ENCODE measurements at regions of chr4 and their contacts with region 1.

Region 1: DNA sequence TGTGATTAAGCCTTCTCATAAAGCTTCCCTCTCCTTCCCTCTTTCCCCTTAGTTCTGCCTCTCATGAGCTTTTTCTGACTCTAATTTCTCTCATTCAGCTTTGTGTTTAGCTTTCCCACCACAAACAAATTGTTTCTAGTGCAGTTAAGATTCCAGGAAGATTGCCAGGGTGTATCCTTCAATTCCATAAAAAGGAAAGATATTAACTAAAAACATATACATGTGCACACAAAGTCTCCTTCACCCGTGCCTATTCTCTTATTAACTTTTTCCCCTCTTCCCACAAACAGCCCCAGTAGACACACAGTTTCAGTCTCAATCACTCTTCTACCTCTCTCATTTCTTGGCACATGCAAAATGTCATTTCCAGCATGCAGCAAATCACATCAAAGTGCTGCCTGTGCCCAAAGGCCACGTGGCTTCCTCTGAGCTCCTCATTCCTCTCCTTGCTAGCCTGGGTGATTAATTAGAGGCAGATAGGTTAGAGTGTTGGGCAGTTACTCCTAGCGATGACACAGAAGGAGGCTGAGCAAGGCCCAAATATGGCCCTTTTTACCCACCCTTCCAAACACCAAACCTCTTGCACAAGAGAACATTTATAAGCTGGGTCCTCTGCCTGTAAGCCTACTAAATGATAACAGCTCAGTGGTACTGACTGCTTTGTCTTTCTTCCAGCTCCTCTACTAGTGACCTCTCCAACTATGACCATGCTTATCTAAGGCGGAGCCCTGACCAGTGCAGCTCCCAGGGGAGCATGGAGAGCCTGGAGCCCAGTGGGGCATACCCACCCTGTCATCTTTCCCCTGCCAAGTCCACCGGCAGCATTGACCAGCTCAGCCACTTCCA is 159.6 kb downstream of the SOWAHB start:
- DNase-seq: peak in 1 of 10 donors; percentile 32
- H3K4me3 ChIP-seq: no peak overlapping the region
- H3K27ac ChIP-seq: peak overlapping the region in 14 of 59 donors; percentile 3 to 63 (median 35)
- H3K27me3 ChIP-seq: no peaks in the 10 kb centered on the region
- CTCF ChIP-seq: no peak

Region 2: DNA sequence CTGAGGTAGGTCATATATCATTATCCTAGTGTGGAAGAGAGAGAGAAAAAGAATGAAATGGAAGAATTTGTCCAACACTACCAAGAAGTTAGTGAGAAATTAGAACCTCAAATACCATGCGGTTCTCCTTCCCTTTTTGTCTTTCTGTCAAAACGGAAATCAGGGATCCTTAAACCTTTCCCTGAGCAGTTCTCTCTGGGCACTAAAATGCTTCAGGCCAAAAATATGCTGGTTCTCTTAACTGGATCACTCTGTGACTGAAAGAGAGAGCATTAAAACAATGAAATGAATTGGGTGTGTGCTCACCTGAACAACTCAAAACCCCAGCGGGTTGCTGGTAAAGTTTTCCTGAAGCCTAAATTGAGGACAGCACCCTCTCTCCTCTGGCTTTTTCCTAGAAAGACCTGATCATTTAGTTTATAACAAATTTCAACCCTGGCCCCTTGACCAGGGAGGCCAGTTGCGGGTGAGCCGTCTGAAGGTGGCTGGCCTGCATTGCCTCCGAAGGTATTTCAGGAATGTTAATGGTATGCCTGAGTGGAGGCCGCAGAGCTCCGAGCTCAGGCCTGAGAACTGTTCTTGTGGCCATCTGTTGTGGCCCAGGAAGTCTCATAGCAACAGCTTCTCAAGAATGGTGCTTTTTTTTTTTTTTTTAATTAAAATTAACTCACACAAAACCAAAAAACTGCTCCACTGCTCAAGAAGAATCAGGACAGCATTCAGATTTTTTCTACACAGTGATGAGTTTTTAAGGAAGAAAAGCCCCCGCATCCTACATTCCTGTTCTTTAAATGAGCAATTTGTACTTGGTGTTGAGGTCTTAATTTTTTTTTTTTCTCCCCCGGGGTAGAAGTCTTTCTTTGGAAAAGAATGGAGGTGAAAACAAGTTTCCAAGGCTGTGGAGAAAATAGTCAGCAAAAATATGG is 148.2 kb before region 1 on chr4:
- intact Hi-C with region 1: loop called in 1 of 2 experiments (anchors 10 kb)
- DNase-seq: peak in 2 of 10 donors; percentile 14 to 41
- H3K4me3 ChIP-seq: peak overlapping the region in 1 of 59 donors; percentile 3
- H3K27ac ChIP-seq: peak overlapping the region in 10 of 59 donors; percentile 3 to 29 (median 20)
- H3K27me3 ChIP-seq: peaks cover 0 to 19% (median 0%) of the 10 kb centered on the region in 45 donors
- CTCF ChIP-seq: no peak

Region 3: DNA sequence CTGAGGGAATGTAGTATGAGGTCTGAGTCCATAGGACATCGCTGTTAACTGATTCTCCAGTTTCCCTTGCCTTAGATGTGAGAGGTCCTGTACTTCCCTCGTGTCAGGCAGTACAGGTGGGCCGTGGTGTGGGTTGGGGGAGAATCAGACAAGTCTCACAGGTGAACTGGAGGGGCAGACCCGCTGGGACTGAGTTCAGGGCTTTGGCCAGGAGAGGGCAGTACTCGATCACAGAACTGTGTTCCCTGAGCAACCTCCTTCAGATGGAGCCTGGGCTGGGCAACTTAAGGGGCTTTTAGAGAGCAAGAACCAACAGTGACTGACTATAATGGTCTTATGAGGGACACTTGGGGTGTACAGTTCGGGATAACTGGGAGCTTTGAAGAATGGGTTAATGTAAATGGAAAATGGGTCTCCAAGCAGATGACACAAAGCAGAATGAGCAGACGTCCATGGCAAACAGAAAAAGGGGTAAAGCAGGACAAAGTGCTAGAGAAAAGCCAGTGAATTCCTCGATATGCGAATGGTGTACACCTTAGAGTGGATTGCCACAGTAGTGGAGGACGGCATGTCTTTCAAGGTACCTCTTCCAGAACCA is 502.3 kb after region 1 on chr4:
- intact Hi-C with region 1: no loop called
- DNase-seq: peak; percentile 46 to 68 (median 64)
- H3K4me3 ChIP-seq: no peak overlapping the region
- H3K27ac ChIP-seq: no peak overlapping the region
- H3K27me3 ChIP-seq: peaks cover 0 to 6% (median 0%) of the 10 kb centered on the region in 45 donors
- CTCF ChIP-seq: peak in 55 of 56 donors; percentile 51 to 87 (median 73)

Measured in dorsolateral prefrontal cortex (tissue), 120 donors.